ENCODE measurements at regions of chr5 and their contacts with region 1.

Region 1: DNA sequence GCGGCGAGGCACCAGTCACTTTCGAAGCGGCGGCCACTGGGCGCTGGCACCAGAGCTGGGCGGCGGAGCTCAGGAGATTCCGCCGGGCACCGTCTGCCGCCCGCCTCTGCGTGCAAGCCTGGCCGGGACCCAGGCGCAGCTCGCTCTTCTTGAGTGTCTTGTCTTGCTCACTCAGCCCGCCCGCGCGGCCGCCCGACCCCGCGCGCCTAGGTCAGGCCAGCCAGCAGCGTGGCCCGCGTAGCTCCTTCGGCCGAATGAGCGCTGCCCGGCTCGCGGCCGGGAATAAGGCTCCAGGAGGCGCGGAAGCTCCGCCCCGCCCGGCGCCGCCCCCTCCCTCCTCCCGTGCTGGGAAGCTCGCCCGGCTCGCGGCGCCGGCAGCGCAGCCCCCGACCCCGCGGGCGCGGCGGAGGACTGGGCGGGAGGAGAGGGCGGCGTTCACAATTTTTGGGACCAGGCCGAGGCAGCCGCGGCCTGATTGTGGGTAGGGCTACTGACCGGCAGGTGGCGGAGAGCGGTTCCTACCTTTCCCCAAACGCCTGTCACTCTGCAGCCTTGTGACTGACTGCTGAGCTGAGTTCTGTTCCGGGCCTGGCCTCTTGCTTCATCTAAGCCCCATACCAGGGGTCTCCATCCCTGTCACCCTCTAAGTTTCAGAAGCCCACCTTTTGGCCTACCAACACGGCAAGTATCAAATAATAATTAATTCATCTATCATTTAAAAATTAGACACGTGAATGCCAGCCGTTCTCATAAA is at the start of gene HBEGF:
- DNase-seq: peak in 8 of 9 experiments; percentile 21 to 66 (median 50)
- ATAC-seq: peak; percentile 73
- H3K4me3 ChIP-seq: peak within 1 kb of the TSS; percentile 48 to 50
- H3K4me3 Mint-ChIP-seq: peak within 1 kb of the TSS; percentile 72
- H3K27ac ChIP-seq: no peak within 1 kb of the TSS
- H3K27ac Mint-ChIP-seq: no peak within 1 kb of the TSS
- H3K4me1 ChIP-seq: peaks cover 23% of the 10 kb centered on the region
- H3K4me1 Mint-ChIP-seq: peaks cover 33% of the 10 kb centered on the region
- H3K27me3 ChIP-seq: peaks cover 0 to 13% of the 10 kb centered on the region in 2 experiments
- H3K27me3 Mint-ChIP-seq: peaks cover 27% of the 10 kb centered on the region
- CTCF ChIP-seq: peak; percentile 41
- total RNA-seq, gene HBEGF: 0.30 to 0.50 TPM

Region 2: DNA sequence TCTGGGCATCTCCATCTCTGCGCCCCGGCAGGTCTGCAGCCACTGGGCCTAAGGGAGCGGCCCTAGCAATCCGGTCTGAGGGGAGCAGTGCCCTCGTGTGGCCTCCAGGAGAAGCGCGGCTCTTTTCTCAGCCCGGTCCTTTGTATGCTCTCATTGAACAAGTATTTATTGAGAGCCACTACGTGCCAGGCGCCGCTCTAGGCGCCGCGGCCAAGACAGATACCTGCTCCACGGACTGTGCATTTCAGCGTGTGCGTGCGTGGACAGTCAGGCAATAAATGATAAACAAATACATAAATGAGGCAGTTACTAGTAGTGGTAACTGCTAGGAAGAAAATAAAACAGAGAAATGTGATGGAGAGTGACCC is 11.2 kb after region 1 on chr5:
- CTCF ChIA-PET with region 1: interaction called, 29 read pairs
- POLR2A ChIA-PET with region 1: no interaction called
- intact Hi-C with region 1: no loop called
- DNase-seq: peak; percentile 55 to 83 (median 67)
- ATAC-seq: peak; percentile 99
- H3K4me3 ChIP-seq: peak overlapping the region in 1 of 2 experiments; percentile 20
- H3K4me3 Mint-ChIP-seq: peak overlapping the region; percentile 64
- H3K27ac ChIP-seq: no peak overlapping the region
- H3K27ac Mint-ChIP-seq: no peak overlapping the region
- H3K4me1 ChIP-seq: peaks cover 9% of the 10 kb centered on the region
- H3K4me1 Mint-ChIP-seq: peaks cover 7% of the 10 kb centered on the region
- H3K27me3 ChIP-seq: no peaks in the 10 kb centered on the region
- H3K27me3 Mint-ChIP-seq: peaks cover 11% of the 10 kb centered on the region
- CTCF ChIP-seq: peak; percentile 77

Region 3: DNA sequence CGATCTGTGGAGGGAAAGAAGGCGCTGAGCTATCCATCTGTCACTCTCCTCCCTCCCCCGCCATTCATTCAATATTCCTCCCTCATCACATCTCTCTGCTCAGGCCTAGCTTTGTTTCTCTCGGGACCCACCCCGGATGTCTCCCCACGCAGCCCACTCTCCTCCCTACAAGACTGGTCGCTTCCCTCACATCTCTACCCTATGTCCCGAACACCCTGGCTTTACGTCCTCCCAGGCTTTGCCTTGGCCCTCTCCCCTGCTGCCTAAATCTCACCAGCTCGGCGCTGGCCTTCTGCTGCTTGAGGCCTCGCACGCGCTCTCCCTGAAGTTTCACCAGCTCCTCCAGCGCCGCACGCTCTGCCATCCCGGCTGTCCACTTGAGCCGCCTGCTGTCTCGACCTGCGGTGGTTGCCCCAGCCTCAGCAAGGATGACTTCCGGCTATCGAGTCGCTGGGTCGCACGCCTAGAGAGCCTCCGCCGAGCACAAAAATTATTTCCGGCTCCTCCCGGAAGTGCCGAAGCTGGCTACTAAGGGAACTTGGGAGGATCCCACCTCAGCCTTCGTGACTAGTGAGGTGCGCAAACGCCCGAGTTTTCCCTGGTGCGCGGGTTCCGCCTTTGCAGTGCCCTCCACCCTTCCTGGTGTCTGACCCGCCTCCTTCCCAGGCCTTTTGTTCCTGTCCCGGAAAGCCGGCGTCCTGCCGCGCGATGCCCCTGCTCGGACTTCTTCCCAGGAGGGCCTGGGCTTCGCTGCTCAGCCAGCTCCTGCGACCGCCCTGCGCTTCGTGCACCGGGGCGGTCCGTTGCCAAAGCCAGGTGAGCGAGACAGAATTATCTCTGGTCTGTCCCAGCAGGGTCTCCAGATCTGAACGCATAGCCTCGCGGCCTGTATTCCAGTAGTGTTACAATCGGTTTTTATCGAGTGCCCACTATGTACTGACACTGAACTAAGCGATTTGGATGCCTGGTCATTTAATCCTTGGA is 344.7 kb after region 1 on chr5 and contains the starts of genes HARS1 and HARS2:
- CTCF ChIA-PET with region 1: no interaction called
- POLR2A ChIA-PET with region 1: no interaction called
- intact Hi-C with region 1: no loop called
- DNase-seq: peak; percentile 58 to 92 (median 83)
- ATAC-seq: peak; percentile 88
- H3K4me3 ChIP-seq: peak within 1 kb of the TSS; percentile 84 to 94
- H3K4me3 Mint-ChIP-seq: peak within 1 kb of the TSS; percentile 99
- H3K27ac ChIP-seq: peak within 1 kb of the TSS; percentile 77 to 87
- H3K27ac Mint-ChIP-seq: peak within 1 kb of the TSS; percentile 98
- H3K4me1 ChIP-seq: peaks cover 23% of the 10 kb centered on the region
- H3K4me1 Mint-ChIP-seq: peaks cover 48% of the 10 kb centered on the region
- H3K27me3 ChIP-seq: no peaks in the 10 kb centered on the region
- H3K27me3 Mint-ChIP-seq: no peaks in the 10 kb centered on the region
- CTCF ChIP-seq: no peak
- total RNA-seq, gene HARS1: 67.3 to 70.2 TPM
- total RNA-seq, gene HARS2: 41.3 to 43.2 TPM

Region 4: GRCh38 chr5:141149812-141150211 is 803.3 kb after region 1 on chr5 and contains the start of gene PCDHB6:
- CTCF ChIA-PET with region 1: no interaction called
- POLR2A ChIA-PET with region 1: no interaction called
- intact Hi-C with region 1: no loop called
- DNase-seq: peak in 1 of 9 experiments; percentile 5
- ATAC-seq: no peak
- H3K4me3 ChIP-seq: no peak within 1 kb of the TSS
- H3K4me3 Mint-ChIP-seq: peak within 1 kb of the TSS; percentile 36
- H3K27ac ChIP-seq: no peak within 1 kb of the TSS
- H3K27ac Mint-ChIP-seq: no peak within 1 kb of the TSS
- H3K4me1 ChIP-seq: no peaks in the 10 kb centered on the region
- H3K4me1 Mint-ChIP-seq: peaks cover 5% of the 10 kb centered on the region
- H3K27me3 ChIP-seq: peaks cover 2 to 4% of the 10 kb centered on the region in 2 experiments
- H3K27me3 Mint-ChIP-seq: peaks cover 30% of the 10 kb centered on the region
- CTCF ChIP-seq: no peak
- total RNA-seq, gene PCDHB6: not detected